IMR-90 (cell line): ENCODE measurements at regions of chr15 and their contacts with region 1.

Region 1: GRCh38 chr15:64767203-64767602 is 8.2 kb downstream of the RBPMS2 start:
- DNase-seq: no peak
- ATAC-seq: no peak
- H3K4me3 ChIP-seq: no peak overlapping the region
- H3K27ac ChIP-seq: no peak overlapping the region
- H3K4me1 ChIP-seq: no peaks in the 10 kb centered on the region
- H3K27me3 ChIP-seq: no peaks in the 10 kb centered on the region
- CTCF ChIP-seq: no peak
- POLR2A ChIP-seq: no peak
- RAD21 ChIP-seq: no peak

Region 2: GRCh38 chr15:64702816-64703646 is 64.2 kb before region 1 on chr15:
- CTCF ChIA-PET with region 1: no interaction called
- POLR2A ChIA-PET with region 1: no interaction called
- dilution Hi-C with region 1: no loop called
- in situ Hi-C with region 1: no loop called
- intact Hi-C with region 1: no loop called
- DNase-seq: peak; percentile 80
- ATAC-seq: peak; percentile 94
- H3K4me3 ChIP-seq: peak overlapping the region; percentile 77
- H3K27ac ChIP-seq: peak overlapping the region; percentile 92
- H3K4me1 ChIP-seq: peaks cover 26% of the 10 kb centered on the region
- H3K27me3 ChIP-seq: no peaks in the 10 kb centered on the region
- CTCF ChIP-seq: no peak
- POLR2A ChIP-seq: peak; percentile 83
- RAD21 ChIP-seq: no peak

Region 3: GRCh38 chr15:64749999-64750657 is 17.1 kb before region 1 on chr15:
- CTCF ChIA-PET with region 1: no interaction called
- POLR2A ChIA-PET with region 1: interaction called, 27 read pairs
- dilution Hi-C with region 1: no loop called
- in situ Hi-C with region 1: no loop called
- intact Hi-C with region 1: no loop called
- DNase-seq: peak; percentile 57
- ATAC-seq: peak; percentile 85
- H3K4me3 ChIP-seq: no peak overlapping the region
- H3K27ac ChIP-seq: no peak overlapping the region
- H3K4me1 ChIP-seq: peaks cover 11% of the 10 kb centered on the region
- H3K27me3 ChIP-seq: peaks cover 2% of the 10 kb centered on the region; the same call in 1 of the 2 replicates
- CTCF ChIP-seq: peak; percentile 17; the same call in 1 of the 2 replicates
- POLR2A ChIP-seq: no peak
- RAD21 ChIP-seq: no peak

Region 4: GRCh38 chr15:65020419-65020818 is 253.2 kb after region 1 on chr15:
- CTCF ChIA-PET with region 1: interaction called, 10 read pairs
- POLR2A ChIA-PET with region 1: no interaction called
- dilution Hi-C with region 1: no loop called
- in situ Hi-C with region 1: no loop called
- intact Hi-C with region 1: no loop called
- DNase-seq: no peak
- ATAC-seq: no peak
- H3K4me3 ChIP-seq: no peak overlapping the region
- H3K27ac ChIP-seq: no peak overlapping the region
- H3K4me1 ChIP-seq: no peaks in the 10 kb centered on the region
- H3K27me3 ChIP-seq: no peaks in the 10 kb centered on the region
- CTCF ChIP-seq: no peak
- POLR2A ChIP-seq: no peak
- RAD21 ChIP-seq: no peak